Dorsolateral prefrontal cortex (tissue), 120 donors: ENCODE measurements at regions of chr14 and their contacts with region 1.

Region 1: DNA sequence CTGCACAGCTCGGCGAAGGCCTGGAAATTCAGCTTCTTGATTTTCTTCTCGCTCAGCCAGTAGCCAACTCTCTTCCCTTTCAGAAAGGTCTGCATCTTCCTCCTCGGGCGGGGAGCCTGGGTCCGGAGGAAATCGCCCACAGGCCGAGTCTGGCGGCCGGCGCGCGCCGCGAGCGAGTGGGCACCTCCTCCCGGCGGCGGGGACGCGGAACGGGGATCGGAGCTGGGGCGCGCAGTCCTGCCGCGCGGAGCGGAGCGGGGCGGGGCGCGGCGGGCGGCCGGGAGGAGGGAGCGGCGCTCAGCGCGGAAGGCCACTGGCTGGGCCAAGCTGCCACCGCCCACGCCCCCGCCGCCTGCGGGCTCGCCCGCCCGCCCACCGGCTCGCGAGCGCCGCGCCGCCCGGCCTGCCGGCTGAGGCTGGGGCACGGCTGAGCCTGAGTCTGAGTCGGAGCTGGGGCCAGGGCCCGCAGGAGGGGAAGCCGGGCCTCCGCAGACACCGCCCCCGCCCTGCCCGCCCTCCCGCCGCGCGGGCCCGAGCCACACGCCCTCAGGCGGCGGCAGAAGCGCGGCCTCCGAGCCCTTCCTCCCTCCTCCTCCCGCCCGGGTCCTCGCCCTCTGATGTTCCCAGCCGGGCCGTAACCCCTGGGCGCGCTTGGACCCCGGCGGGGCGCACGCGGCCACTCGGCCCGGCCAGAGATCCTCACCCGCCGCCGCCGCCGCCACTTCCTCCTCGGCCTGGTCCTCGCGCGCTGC is 480 bp downstream of the ITPK1 start:
- DNase-seq: peak; percentile 62 to 94 (median 84)
- H3K4me3 ChIP-seq: peak overlapping the region; percentile 65 to 97 (median 89)
- H3K27ac ChIP-seq: peak overlapping the region; percentile 80 to 99 (median 95)
- H3K27me3 ChIP-seq: no peaks in the 10 kb centered on the region
- CTCF ChIP-seq: peak in 25 of 56 donors; percentile 2 to 57 (median 21)

Region 2: DNA sequence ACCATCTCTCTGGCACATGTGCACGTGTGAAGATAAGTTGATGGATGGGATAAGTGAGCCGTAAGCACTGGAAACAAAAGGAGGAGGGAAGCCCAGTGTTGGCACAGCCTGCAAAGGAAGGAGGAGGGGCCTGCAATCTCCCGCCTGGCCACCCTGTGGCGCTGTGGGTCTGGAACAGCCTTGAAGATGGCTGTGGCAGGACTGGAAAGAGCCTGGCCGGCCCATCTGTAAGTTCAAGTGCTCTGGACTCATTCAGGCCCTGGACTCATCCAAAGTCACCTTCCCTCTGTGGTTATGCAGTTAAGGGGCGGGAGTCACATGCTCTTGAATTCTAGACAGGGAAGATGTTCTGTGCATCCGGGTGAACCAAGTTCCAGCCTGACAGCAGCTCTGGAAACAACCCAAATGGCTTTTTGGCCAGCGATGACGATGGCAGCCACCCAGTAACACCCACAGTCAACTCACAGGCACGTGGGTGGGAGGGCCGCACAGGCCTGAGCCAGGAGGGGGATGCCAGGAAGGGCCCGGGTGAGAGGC is 141.9 kb before region 1 on chr14:
- intact Hi-C with region 1: loop called (anchors 1 to 5 kb)
- DNase-seq: peak; percentile 50 to 91 (median 86)
- H3K4me3 ChIP-seq: no peak overlapping the region
- H3K27ac ChIP-seq: peak overlapping the region; percentile 24 to 92 (median 85)
- H3K27me3 ChIP-seq: no peaks in the 10 kb centered on the region
- CTCF ChIP-seq: peak; percentile 67 to 95 (median 85)

Region 3: GRCh38 chr14:93035917-93036651 is 79.2 kb before region 1 on chr14:
- intact Hi-C with region 1: loop called (anchors 1 kb)
- DNase-seq: peak in 9 of 10 donors; percentile 83 to 95 (median 93)
- H3K4me3 ChIP-seq: peak overlapping the region in 15 of 59 donors; percentile 6 to 52 (median 34)
- H3K27ac ChIP-seq: peak overlapping the region; percentile 84 to 100 (median 98)
- H3K27me3 ChIP-seq: no peaks in the 10 kb centered on the region
- CTCF ChIP-seq: peak in 5 of 56 donors; percentile 8 to 27 (median 17)

Region 4: DNA sequence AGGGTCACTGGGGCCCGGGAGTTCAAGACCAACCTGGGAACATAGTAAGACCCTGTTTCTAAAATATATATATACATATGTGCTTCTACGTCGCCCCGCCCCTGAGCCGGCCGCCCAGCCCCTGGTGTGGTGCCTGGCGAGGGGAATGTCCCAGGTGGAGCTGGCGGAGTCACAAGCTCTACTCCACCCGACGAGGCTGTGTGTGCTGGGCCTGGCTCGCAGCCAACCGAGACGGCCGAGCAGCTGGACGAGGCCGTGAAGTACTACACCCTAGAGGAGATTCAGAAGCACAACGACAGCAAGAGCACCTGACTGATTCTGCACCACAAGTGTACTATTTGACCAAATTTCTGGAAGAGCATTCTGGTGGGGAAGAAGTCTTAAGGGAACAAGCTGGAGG is 22.6 kb after region 1 on chr14:
- intact Hi-C with region 1: loop called (anchors 2 kb)
- DNase-seq: no peak
- H3K4me3 ChIP-seq: no peak overlapping the region
- H3K27ac ChIP-seq: no peak overlapping the region
- H3K27me3 ChIP-seq: no peaks in the 10 kb centered on the region
- CTCF ChIP-seq: no peak

Region 5: GRCh38 chr14:93481758-93482157 is 366.5 kb after region 1 on chr14:
- intact Hi-C with region 1: no loop called
- DNase-seq: no peak
- H3K4me3 ChIP-seq: no peak overlapping the region
- H3K27ac ChIP-seq: no peak overlapping the region
- H3K27me3 ChIP-seq: no peaks in the 10 kb centered on the region
- CTCF ChIP-seq: no peak

Region 6: GRCh38 chr14:93702946-93703345 is 587.7 kb after region 1 on chr14:
- intact Hi-C with region 1: no loop called
- DNase-seq: no peak
- H3K4me3 ChIP-seq: no peak overlapping the region
- H3K27ac ChIP-seq: no peak overlapping the region
- H3K27me3 ChIP-seq: no peaks in the 10 kb centered on the region
- CTCF ChIP-seq: no peak